Activated T-helper 1 cell treated with anti-CD3 and anti-CD28 coated beads, Interleukin-12 subunit alpha, Interleukin-12 subunit beta, Interleukin-2, Interleukin-4 antibody, amounts not matched to agents 30 ng/mL and 10 ng/mL and 1 ng/mL, durations not matched to agents 14 hours and 24 hours and 36 hours (primary cell): ENCODE measurements at regions of chr15 and their contacts with region 1.

Region 1: GRCh38 chr15:56086566-56086965 is 93.2 kb upstream of the NEDD4 start:
- DNase-seq: no peak
- H3K4me3 Mint-ChIP-seq: no peak overlapping the region
- H3K27ac Mint-ChIP-seq: no peak overlapping the region
- H3K4me1 Mint-ChIP-seq: peaks cover 13% of the 10 kb centered on the region
- H3K27me3 Mint-ChIP-seq: peaks cover 2% of the 10 kb centered on the region

Region 2: GRCh38 chr15:56014685-56015084 is 71.9 kb before region 1 on chr15:
- intact Hi-C with region 1: loop called (anchors 2 kb)
- DNase-seq: no peak
- H3K4me3 Mint-ChIP-seq: no peak overlapping the region
- H3K27ac Mint-ChIP-seq: no peak overlapping the region
- H3K4me1 Mint-ChIP-seq: no peaks in the 10 kb centered on the region
- H3K27me3 Mint-ChIP-seq: peaks cover 9% of the 10 kb centered on the region

Region 3: DNA sequence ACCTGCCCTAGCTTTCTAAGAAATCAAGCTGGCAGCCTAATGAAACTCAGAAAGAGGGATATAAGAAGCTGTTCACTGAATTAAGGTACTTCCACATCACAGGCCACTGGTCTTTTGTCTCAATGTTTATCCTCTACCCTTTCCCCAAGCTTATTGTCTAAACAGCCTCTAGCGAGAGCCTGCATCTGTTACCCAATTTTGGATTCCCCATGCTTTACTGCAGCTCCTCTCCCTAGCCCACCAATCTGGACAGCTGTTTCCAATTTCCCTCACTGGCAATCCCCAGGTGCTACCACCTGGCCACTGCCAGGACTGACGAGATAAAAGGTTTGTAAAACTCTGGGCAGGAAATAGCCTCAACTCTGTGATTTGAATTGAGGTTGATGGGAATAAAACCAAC is 220.6 kb after region 1 on chr15:
- intact Hi-C with region 1: no loop called
- DNase-seq: no peak
- H3K4me3 Mint-ChIP-seq: no peak overlapping the region
- H3K27ac Mint-ChIP-seq: no peak overlapping the region
- H3K4me1 Mint-ChIP-seq: no peaks in the 10 kb centered on the region
- H3K27me3 Mint-ChIP-seq: no peaks in the 10 kb centered on the region